ENCODE measurements at regions of chr13 and their contacts with region 1.

Region 1: GRCh38 chr13:20891768-20892167 is 10.8 kb downstream of the XPO4 start:
- DNase-seq: no peak
- H3K4me3 ChIP-seq: no peak overlapping the region
- CTCF ChIP-seq: no peak

Region 2: GRCh38 chr13:20902438-20903163 is 10.8 kb after region 1 on chr13 and contains the start of gene XPO4:
- CTCF ChIA-PET with region 1: interaction called, 14 read pairs
- POLR2A ChIA-PET with region 1: no interaction called
- DNase-seq: no peak
- H3K4me3 ChIP-seq: peak within 1 kb of the TSS; percentile 95
- CTCF ChIP-seq: no peak